ENCODE measurements at regions of chr6 and their contacts with region 1.

Region 1: DNA sequence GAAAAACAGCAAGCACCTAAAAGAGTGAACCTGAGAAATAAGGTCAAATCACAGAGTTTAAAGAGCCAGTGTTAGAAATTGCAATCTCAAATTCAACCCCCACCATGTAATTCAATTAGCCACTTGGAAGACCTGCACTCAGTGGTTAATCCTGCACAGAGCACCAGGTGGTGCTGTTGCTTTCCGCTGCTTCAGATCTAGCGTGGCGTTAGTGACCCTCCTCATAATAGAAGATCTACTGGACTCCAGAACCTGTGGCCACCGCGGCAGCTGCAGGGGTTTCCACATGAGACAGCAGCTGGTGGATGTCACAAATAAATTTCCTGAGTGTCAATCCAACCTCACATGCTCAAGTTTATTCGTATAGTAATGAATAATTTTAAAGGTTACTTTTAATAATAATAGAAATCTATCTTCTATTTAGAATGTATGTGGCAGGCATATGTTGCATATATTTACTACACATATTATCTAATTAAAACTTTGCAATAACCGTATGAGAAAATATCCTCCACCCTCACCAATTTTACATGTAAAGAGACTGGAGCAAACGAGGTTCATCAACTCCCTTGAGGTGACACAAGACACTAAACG is 84.4 kb downstream of the SYNE1 start:
- DNase-seq: peak; percentile 51 to 69
- ATAC-seq: peak; percentile 88 to 99 (median 99)
- H3K4me3 ChIP-seq: no peak overlapping the region
- H3K4me3 Mint-ChIP-seq: no peak overlapping the region
- H3K27ac ChIP-seq: no peak overlapping the region
- H3K27ac Mint-ChIP-seq: peak overlapping the region in 1 of 2 donors; percentile 37
- H3K4me1 ChIP-seq: peaks cover 7% of the 10 kb centered on the region
- H3K4me1 Mint-ChIP-seq: peaks cover 51 to 64% of the 10 kb centered on the region in 2 donors
- H3K27me3 ChIP-seq: no peaks in the 10 kb centered on the region
- H3K27me3 Mint-ChIP-seq: no peaks in the 10 kb centered on the region
- CTCF ChIP-seq: peak; percentile 95

Region 2: GRCh38 chr6:152642989-152643388 is 90.3 kb after region 1 on chr6:
- intact Hi-C with region 1: loop called (anchors 1 kb)
- DNase-seq: peak; percentile 51 to 74
- ATAC-seq: peak; percentile 82 to 100 (median 99)
- H3K4me3 ChIP-seq: no peak overlapping the region
- H3K4me3 Mint-ChIP-seq: no peak overlapping the region
- H3K27ac ChIP-seq: no peak overlapping the region
- H3K27ac Mint-ChIP-seq: no peak overlapping the region
- H3K4me1 ChIP-seq: peaks cover 3% of the 10 kb centered on the region
- H3K4me1 Mint-ChIP-seq: peaks cover 25 to 29% of the 10 kb centered on the region in 2 donors
- H3K27me3 ChIP-seq: no peaks in the 10 kb centered on the region
- H3K27me3 Mint-ChIP-seq: peaks cover 13 to 14% of the 10 kb centered on the region in 2 donors
- CTCF ChIP-seq: peak; percentile 65

Region 3: DNA sequence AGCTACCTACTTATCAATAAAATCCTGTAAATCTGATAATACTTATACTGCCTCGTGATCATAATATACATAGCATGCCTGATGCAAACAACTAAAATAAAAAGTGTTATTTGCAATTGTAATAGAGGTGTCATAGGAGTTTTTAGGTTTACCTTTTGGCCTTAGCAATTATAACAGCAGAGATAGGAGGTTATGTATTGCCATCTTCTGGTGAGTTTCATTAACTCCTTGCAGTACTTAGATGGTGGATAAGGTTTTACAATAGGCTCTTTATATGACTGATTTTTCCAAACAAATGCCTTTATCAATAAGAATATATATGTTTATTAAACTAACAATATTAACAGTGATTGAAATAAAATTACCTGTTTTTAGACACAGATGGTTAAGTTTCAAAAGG is 117.2 kb after region 1 on chr6:
- intact Hi-C with region 1: loop called (anchors 1 kb)
- DNase-seq: peak in 1 of 2 donors; percentile 32
- ATAC-seq: peak; percentile 47 to 64 (median 63)
- H3K4me3 ChIP-seq: no peak overlapping the region
- H3K4me3 Mint-ChIP-seq: no peak overlapping the region
- H3K27ac ChIP-seq: no peak overlapping the region
- H3K27ac Mint-ChIP-seq: no peak overlapping the region
- H3K4me1 ChIP-seq: no peaks in the 10 kb centered on the region
- H3K4me1 Mint-ChIP-seq: no peaks in the 10 kb centered on the region
- H3K27me3 ChIP-seq: peaks cover 2% of the 10 kb centered on the region
- H3K27me3 Mint-ChIP-seq: peaks cover 18 to 43% of the 10 kb centered on the region in 2 donors
- CTCF ChIP-seq: peak; percentile 42